Ovary (tissue), 10 donors: ENCODE measurements at regions of chr13 and their contacts with region 1.

Region 1: DNA sequence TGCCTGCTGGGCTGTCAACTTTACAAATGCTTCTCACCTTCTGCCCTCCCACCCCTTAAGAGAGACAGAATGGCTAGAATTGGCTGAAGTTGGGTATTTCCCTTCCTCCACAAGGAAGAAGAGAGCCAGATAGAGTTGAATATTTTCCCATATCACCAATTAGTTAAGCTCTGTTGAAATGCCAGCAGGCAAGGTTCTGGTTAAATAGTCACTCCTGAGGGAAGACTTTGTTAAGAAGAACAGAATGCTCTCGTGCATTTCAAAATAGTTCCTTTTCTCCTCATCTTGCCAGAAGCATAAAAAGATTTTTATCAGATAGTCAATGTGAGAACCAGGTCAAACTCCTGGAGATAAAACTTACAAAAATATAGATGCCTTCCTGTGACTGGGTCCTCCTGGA is 2857.0 kb upstream of the PCDH20 start:
- DNase-seq: no peak
- H3K4me3 ChIP-seq: no peak overlapping the region
- H3K27ac ChIP-seq: no peak overlapping the region
- H3K4me1 ChIP-seq: no peaks in the 10 kb centered on the region
- H3K27me3 ChIP-seq: no peaks in the 10 kb centered on the region
- CTCF ChIP-seq: no peak
- EP300 ChIP-seq: no peak
- POLR2A ChIP-seq: no peak

Region 2: GRCh38 chr13:64283926-64284325 is 11.2 kb after region 1 on chr13:
- intact Hi-C with region 1: loop called in 1 of 4 experiments (anchors 1 kb)
- DNase-seq: no peak
- H3K4me3 ChIP-seq: no peak overlapping the region
- H3K27ac ChIP-seq: no peak overlapping the region
- H3K4me1 ChIP-seq: no peaks in the 10 kb centered on the region
- H3K27me3 ChIP-seq: no peaks in the 10 kb centered on the region
- CTCF ChIP-seq: no peak
- EP300 ChIP-seq: no peak
- POLR2A ChIP-seq: no peak

Region 3: GRCh38 chr13:64397701-64398100 is 125.0 kb after region 1 on chr13:
- intact Hi-C with region 1: no loop called
- DNase-seq: no peak
- H3K4me3 ChIP-seq: no peak overlapping the region
- H3K27ac ChIP-seq: no peak overlapping the region
- H3K4me1 ChIP-seq: no peaks in the 10 kb centered on the region
- H3K27me3 ChIP-seq: no peaks in the 10 kb centered on the region
- CTCF ChIP-seq: no peak
- EP300 ChIP-seq: no peak
- POLR2A ChIP-seq: no peak